Prostate gland (tissue), 2 donors: ENCODE measurements at regions of chr14 and their contacts with region 1.

Region 1: DNA sequence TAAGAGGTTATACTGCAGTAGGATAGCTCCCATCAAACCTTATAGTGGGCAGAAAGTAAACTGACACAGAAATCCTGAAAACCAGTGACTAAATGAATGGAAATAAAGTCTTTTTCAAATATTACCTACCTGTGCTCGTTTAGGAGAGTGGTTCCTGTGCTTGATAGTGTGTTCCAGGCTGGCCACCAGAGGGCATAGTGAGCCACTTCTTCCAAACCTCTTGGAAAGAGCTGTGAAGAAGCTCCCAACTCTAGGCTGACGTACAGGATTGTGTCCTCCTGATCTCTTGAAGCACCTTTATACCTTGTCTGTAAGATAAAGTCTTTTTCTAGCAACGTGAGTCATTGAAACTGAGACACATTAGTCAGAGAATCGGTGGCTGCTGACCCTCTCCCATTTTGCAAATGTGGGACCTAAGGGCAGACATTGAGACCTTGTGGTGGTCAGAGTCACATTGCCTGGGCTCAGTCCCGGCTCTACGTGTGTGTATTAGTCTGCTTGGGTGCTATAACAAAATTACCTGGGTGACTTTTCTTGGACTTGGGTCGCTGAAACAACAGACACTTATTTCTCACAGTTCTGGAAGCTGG is 17.6 kb downstream of the TDP1 start:
- DNase-seq: peak; percentile 59
- H3K4me3 ChIP-seq: no peak overlapping the region
- H3K27ac ChIP-seq: no peak overlapping the region
- H3K4me1 ChIP-seq: no peaks in the 10 kb centered on the region
- H3K27me3 ChIP-seq: no peaks in the 10 kb centered on the region
- CTCF ChIP-seq: peak; percentile 68 to 82 (median 78)
- POLR2A ChIP-seq: no peak

Region 2: DNA sequence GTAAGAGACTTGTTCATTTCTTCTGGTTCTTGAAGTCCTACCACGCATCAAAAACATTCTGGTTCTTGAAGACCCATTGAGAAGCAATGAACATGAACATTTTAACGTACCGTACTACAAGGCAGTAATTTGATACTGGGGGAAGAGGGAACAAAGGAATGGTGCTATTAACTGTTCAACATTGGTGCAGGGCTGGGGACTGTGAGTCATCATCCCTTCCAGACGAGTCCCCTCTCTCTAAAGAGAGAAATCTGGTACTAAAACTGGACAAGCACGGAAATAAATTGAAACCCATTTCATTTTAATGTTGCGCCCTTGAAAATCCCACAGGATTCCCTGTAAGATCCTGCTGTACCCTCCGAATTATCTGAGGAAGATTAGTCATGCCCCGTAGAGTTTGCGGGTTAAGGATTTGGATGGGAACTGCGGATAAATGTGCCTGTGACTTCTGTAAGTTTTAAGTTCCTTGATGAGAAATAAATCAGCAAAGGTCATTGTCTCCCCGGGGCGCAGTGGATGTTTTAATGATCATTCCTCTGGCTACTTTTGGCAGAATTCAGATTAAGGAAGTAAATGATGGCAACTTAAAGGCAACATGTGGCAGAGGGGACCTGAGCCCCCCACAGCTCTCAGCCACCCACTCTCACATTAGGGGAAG is 167.1 kb after region 1 on chr14:
- intact Hi-C with region 1: no loop called
- DNase-seq: no peak
- H3K4me3 ChIP-seq: no peak overlapping the region
- H3K27ac ChIP-seq: no peak overlapping the region
- H3K4me1 ChIP-seq: no peaks in the 10 kb centered on the region
- H3K27me3 ChIP-seq: no peaks in the 10 kb centered on the region
- CTCF ChIP-seq: no peak
- POLR2A ChIP-seq: no peak

Region 3: DNA sequence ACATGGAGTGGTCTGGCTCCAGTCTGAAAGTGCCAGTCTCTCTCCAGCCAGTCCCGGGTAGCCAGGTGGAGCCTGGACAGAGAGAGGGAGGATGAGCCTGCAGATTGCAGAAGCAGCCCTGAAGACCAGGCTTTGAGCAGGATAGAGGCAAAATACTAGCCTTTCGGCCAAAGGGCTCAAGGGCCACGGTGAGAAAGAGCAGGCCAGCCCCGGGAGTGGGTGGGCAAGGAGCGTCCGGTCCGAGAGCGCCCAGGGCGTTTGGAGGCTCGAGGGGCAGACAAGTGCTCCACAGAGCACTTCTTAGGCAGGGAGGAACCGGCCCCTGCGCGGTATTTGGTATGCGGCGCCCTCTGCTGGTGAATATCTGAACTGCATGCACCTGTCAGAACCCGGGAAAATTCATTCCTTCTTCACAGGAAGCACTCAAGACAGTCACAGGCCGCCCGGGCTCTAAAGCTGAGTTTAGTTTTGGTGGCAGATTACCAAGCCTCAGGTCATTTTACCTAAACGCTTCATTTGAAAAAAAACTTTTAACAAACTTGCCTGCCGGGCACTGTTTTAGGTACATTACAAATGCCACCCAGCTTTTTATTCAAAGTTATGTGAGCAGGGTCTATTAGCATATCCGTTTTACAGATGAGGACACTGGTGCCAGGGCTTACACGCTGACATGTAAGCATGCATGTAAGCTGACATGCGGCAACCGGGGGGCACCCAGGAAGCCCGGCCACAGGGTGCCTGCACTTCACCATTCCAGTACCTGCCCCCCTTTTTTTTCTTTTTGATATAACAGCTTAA is 262.0 kb after region 1 on chr14:
- intact Hi-C with region 1: loop called (anchors 10 kb)
- DNase-seq: peak; percentile 14
- H3K4me3 ChIP-seq: no peak overlapping the region
- H3K27ac ChIP-seq: no peak overlapping the region
- H3K4me1 ChIP-seq: no peaks in the 10 kb centered on the region
- H3K27me3 ChIP-seq: no peaks in the 10 kb centered on the region
- CTCF ChIP-seq: peak; percentile 76 to 96 (median 84)
- POLR2A ChIP-seq: no peak

Region 4: DNA sequence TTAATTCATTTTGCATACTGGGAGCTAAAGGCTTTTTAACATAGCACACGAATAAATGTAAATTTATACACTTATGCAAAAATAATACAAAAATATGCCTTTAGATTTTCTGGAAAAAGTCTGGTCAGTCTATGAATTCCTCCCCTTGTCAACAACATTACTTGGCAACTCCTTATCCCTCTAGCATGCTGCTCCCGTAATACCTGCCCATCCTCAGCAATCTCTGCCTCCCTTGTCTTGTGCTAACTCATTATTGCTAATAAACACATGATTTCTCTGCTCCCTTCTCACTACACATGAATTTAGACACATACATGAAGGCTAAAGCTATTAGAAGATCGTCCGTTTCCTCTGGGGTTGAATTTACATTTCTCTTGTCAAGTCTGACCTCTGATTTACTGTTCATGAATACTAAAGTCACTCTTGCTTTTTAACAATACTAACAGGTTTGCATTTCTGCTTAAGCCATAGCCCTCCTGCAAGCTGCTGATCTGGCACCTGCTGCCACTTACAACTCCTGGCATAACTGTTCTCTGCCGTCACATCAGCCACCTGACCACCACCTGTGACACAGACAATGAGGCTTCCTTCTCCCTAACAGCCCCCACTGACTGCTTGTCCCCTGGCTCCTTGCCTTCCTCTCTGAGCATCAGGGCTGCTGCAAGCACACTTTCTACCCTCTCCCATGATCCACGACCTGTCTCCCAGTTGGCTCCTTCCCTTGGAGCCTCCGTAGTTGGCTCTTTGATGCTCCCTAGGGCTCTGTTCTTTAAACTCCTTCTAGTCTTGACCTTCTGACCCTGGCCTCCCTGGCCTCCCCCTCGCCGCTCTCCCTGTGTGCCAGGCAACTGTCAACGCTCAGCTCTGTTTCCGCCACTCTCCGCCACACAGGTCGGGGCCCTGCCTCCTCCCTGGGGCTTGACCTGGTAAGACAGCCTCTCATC is 601.1 kb after region 1 on chr14:
- intact Hi-C with region 1: no loop called
- DNase-seq: no peak
- H3K4me3 ChIP-seq: no peak overlapping the region
- H3K27ac ChIP-seq: no peak overlapping the region
- H3K4me1 ChIP-seq: no peaks in the 10 kb centered on the region
- H3K27me3 ChIP-seq: no peaks in the 10 kb centered on the region
- CTCF ChIP-seq: no peak
- POLR2A ChIP-seq: no peak